A673 (cell line): ENCODE measurements at regions of chr1 and their contacts with region 1.

Region 1: GRCh38 chr1:178749581-178750166 is 24.6 kb downstream of the RALGPS2 start:
- DNase-seq: no peak
- H3K4me3 ChIP-seq: no peak overlapping the region
- H3K27ac ChIP-seq: no peak overlapping the region
- H3K4me1 ChIP-seq: no peaks in the 10 kb centered on the region
- H3K27me3 ChIP-seq: no peaks in the 10 kb centered on the region
- CTCF ChIP-seq: no peak

Region 2: DNA sequence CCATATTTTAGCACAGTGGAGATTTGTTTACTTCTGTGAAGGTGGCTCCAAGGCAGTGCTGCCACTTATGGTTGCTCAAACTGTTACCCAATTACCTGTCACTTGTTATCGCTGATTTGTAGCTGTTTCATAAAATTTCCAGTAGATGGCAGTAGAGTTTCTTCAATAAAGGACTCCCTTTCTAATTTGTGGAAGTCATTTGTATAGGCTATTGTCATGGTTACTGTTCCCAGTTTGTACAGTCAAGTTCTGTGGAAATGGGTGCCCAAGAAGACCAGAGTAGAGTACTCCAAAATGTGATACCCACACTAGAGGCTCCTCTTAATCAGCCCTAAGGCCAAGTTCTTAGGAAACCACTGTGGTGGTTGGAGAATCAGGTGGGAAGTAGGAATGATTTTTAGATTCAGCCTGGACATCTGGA is 439.0 kb before region 1 on chr1:
- CTCF ChIA-PET with region 1: interaction called, 14 read pairs
- POLR2A ChIA-PET with region 1: no interaction called
- intact Hi-C with region 1: loop called (anchors 10 kb)
- DNase-seq: peak; percentile 84
- H3K4me3 ChIP-seq: no peak overlapping the region
- H3K27ac ChIP-seq: no peak overlapping the region
- H3K4me1 ChIP-seq: no peaks in the 10 kb centered on the region
- H3K27me3 ChIP-seq: no peaks in the 10 kb centered on the region
- CTCF ChIP-seq: peak; percentile 74

Region 3: GRCh38 chr1:178532392-178532791 is 217.3 kb before region 1 on chr1:
- CTCF ChIA-PET with region 1: interaction called, 5 read pairs
- POLR2A ChIA-PET with region 1: no interaction called
- intact Hi-C with region 1: loop called (anchors 2 kb)
- DNase-seq: peak; percentile 86
- H3K4me3 ChIP-seq: no peak overlapping the region
- H3K27ac ChIP-seq: no peak overlapping the region
- H3K4me1 ChIP-seq: peaks cover 11% of the 10 kb centered on the region
- H3K27me3 ChIP-seq: no peaks in the 10 kb centered on the region
- CTCF ChIP-seq: peak; percentile 97